ENCODE measurements at regions of chr1 and their contacts with region 1.

Region 1: DNA sequence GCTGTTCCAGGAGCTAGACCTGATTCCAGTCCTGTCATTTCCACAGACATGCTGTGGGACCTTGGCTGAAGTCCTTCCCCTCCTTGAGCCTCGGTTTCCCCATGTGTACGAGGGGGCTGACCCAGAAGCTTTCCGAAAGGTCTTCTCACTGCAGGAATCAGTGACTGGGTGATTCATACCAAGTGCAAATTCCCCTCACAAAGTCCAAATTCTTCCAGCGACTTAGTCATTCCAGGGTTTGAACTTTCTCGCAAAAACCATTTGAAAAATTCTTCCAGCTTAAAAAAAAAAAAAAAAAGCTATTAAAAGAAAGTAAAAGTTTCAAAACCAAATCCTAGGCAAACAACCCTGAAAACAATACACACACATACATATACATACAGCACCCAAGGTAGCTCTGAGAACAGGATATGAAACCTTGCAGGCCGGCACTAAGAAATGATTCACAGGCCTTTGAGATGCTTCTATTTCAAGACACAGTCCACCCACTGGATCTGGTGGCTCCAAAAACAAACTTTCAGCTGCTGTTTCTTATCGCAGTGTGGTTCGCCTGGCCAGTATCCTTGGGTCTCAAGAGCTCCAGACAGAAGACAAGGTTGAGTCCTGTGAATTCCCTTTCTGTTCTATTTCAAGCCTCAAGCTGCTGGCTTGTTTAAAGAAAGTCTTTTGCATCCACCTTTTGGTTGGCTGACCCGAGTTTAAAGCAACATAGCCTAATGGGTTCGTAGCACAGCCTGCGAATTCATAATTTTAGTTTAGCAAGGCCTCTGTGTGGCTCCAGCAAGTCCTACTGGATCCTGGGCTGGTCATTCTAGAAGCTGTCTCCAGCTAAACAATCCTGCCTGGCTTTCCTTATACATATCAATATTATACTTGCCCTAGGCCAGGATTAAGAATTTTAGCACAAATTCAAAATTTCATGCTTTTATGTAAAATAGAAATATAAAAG is 18.0 kb upstream of the ID3 start:
- DNase-seq: peak in 1 of 2 donors; percentile 74
- ATAC-seq: peak; percentile 80
- H3K4me3 ChIP-seq: peak overlapping the region in 1 of 2 donors; percentile 85
- H3K27ac ChIP-seq: peak overlapping the region; percentile 95 to 100
- H3K4me1 ChIP-seq: peaks cover 2 to 15% of the 10 kb centered on the region in 2 donors
- H3K27me3 ChIP-seq: no peaks in the 10 kb centered on the region

Region 2: GRCh38 chr1:23559136-23559984 is 18.0 kb before region 1 on chr1 and contains the start of gene ID3:
- intact Hi-C with region 1: loop called (anchors 1 to 2 kb)
- DNase-seq: peak; percentile 99
- ATAC-seq: peak; percentile 86
- H3K4me3 ChIP-seq: peak within 1 kb of the TSS; percentile 93 to 99
- H3K27ac ChIP-seq: peak within 1 kb of the TSS; percentile 100
- H3K4me1 ChIP-seq: peaks cover 0 to 5% of the 10 kb centered on the region in 2 donors
- H3K27me3 ChIP-seq: no peaks in the 10 kb centered on the region
- total RNA-seq, gene ID3: 368 to 390 TPM